ENCODE measurements at regions of chr11 and their contacts with region 1.

Region 1: DNA sequence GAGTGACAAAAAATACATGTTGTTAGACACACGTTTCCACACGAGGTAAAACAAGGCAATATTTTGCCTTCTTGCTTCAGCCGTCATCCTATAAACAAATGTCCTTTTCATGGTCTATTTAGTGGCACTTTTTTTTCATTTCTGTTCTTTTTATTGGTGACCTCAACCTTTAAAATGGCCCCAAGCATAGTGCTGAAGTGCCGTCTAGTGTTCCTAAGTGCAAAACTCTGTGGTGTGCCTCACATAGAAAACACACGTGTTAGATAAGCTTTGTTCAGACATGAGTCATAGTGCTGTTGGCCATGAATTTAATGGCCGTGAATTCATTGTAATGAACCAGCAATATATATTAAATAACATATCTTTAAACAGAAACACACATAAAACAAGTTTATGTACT is 15.6 kb downstream of the OVCH2 start:
- DNase-seq: peak; percentile 58
- H3K4me3 ChIP-seq: no peak overlapping the region
- H3K27ac ChIP-seq: no peak overlapping the region
- H3K4me1 ChIP-seq: no peaks in the 10 kb centered on the region
- H3K27me3 ChIP-seq: peaks cover 17% of the 10 kb centered on the region

Region 2: DNA sequence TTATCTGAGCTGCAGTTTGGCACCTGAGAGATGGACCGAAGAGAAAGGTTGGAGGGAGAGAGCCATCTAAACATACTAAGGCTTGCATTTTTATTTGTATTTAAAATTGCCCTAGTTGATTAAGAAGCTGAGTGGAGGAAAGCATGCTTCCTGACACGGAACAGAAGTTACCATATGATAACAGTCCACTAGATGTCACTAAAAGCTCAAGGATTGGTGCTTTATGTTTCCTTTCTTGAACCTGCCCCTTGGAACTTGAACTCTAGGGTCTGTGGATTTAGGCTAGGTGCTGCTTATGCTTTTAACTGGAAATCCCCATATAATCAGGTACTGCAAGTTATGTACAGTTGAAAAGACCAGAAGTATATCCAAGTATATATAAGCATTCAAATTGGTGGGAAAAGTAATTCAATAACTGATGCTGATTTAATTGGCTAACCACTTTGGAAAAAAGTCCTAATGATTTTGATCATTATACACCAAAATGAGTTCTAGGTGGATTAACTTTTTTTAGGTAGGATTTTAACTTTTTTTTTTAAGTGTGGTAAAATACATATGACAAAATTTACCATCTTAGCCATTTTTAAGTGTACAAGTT is 592.3 kb before region 1 on chr11:
- in situ Hi-C with region 1: loop called (anchors 10 kb)
- DNase-seq: peak; percentile 64
- H3K4me3 ChIP-seq: no peak overlapping the region
- H3K27ac ChIP-seq: no peak overlapping the region
- H3K4me1 ChIP-seq: no peaks in the 10 kb centered on the region
- H3K27me3 ChIP-seq: peaks cover 24% of the 10 kb centered on the region; the same call in 1 of the 2 replicates

Region 3: DNA sequence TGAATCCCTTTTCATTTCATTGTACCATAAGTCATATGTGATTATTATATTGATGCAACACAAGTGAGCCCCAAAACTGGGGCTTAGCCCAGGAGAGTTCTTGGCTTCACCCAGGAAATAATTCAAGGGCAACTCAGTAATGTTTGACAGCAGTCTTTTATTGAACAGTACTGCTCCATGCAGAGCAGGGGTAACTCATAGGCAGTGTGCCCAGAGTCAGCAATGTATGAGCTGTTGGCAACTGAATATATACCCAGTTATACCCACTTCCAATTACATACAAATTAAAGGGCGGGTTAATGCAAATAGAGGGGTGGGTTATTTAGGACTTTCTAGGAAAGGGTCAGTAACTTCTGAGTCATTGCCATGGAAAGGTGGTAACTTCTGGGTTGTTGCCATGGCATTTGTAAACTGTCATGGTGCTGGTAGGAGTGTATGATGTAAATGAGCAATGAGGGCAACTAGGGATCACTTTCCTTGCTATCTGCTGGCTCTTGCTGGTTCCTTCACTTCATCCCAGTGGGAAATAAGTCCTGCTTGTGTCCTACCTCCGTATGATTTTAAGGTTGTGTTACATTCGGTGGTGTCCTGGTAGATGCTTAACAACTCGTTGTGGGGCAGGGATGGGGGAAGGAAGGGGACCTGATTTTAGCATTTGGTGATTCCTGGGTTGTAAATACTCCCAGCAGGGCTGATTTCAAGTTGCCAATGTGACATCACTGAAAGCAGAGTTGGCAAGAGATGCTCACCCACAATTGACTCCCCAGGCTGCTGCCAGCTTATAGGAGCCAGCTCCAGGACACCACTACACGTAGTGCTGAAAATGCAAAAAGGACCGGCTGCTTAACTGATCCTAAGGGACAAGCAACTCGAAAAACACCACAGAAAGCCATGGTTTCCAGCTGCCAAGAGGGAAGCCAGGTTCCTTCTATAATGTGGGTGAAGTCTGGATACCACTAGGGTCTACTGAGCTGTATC is 368.9 kb before region 1 on chr11:
- in situ Hi-C with region 1: no loop called
- DNase-seq: no peak
- H3K4me3 ChIP-seq: no peak overlapping the region
- H3K27ac ChIP-seq: no peak overlapping the region
- H3K4me1 ChIP-seq: no peaks in the 10 kb centered on the region
- H3K27me3 ChIP-seq: no peaks in the 10 kb centered on the region; the same call in 1 of the 2 replicates

Region 4: GRCh38 chr11:7621090-7621489 is 69.6 kb before region 1 on chr11:
- in situ Hi-C with region 1: no loop called
- DNase-seq: no peak
- H3K4me3 ChIP-seq: no peak overlapping the region
- H3K27ac ChIP-seq: no peak overlapping the region
- H3K4me1 ChIP-seq: no peaks in the 10 kb centered on the region
- H3K27me3 ChIP-seq: no peaks in the 10 kb centered on the region

Measured in GM23248 (cell line).